ENCODE measurements at regions of chrX and their contacts with region 1.

Region 1: DNA sequence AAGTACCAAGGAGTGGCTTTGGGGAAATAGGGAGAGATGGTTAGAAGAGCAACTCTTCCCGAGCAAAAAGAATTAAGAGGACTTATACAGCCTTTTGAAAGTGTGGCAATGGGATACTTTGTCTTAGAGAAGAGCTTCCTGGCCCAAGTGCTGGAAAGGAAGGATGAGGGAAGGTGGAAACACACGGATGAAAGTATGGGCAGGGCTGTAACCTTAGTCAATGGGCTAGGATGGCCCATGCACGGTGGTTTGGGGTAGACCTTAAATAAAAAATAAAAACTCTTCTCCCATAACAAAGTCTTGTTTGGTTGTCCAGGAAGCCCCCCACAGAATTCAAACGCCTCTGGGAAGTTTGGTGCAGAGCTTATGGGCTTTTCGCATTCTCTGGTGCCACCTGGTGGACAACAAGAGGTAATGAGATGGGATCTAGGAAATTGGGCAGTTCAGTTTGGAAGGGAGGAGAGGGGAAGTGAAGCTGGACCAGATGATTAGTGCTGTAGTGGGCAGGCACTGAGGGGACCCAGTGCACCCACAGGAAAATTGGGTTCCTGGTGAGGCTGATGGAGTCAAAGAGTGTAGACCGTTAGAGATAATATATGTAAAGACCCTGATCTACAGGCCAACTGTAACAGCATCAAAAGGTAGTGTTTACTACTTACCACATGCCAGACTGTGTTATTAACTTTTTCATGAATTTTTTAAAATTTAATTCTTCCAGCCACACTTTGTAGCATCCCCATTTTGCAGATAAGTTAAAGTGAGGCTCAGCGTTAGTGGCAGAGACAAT is 13.8 kb upstream of the ENOX2 start:
- DNase-seq: peak; percentile 66
- ATAC-seq: peak; percentile 57
- H3K4me3 ChIP-seq: no peak overlapping the region
- H3K4me3 Mint-ChIP-seq: no peak overlapping the region
- H3K27ac ChIP-seq: no peak overlapping the region
- H3K27ac Mint-ChIP-seq: no peak overlapping the region
- H3K4me1 ChIP-seq: no peaks in the 10 kb centered on the region
- H3K4me1 Mint-ChIP-seq: no peaks in the 10 kb centered on the region
- H3K27me3 ChIP-seq: peaks cover 0 to 5% (median 0%) of the 10 kb centered on the region in 4 experiments
- H3K27me3 Mint-ChIP-seq: peaks cover 3% of the 10 kb centered on the region
- CTCF ChIP-seq: peak; percentile 72

Region 2: GRCh38 chrX:129600981-129601424 is 1315.8 kb before region 1 on chrX:
- CTCF ChIA-PET with region 1: no interaction called
- POLR2A ChIA-PET with region 1: no interaction called
- intact Hi-C with region 1: loop called (anchors 5 kb)
- DNase-seq: peak; percentile 37
- ATAC-seq: peak; percentile 37
- H3K4me3 ChIP-seq: no peak overlapping the region
- H3K4me3 Mint-ChIP-seq: no peak overlapping the region
- H3K27ac ChIP-seq: no peak overlapping the region
- H3K27ac Mint-ChIP-seq: no peak overlapping the region
- H3K4me1 ChIP-seq: peaks cover 8 to 15% of the 10 kb centered on the region in 2 donors
- H3K4me1 Mint-ChIP-seq: peaks cover 14% of the 10 kb centered on the region
- H3K27me3 ChIP-seq: no peaks in the 10 kb centered on the region
- H3K27me3 Mint-ChIP-seq: no peaks in the 10 kb centered on the region
- CTCF ChIP-seq: peak; percentile 67

Region 3: DNA sequence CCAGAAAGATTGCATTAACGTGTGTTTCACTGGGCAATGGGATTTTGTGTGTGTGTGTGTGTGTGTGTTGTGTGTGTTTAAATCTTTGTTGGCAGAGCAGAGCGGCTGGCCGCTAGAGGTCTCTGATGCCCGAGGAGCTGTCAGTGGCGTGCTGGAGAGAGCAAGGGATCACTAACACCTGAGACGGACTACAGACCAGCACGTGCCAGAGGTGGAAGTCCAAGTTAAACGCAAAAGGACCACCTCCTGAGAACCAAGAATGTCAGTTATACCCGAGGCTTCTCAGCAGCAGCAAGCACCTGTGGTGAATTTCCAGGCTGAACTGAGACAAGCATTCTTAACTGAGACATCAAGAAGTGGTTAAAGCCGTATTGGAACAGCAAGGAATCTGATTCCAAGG is 586.1 kb before region 1 on chrX:
- CTCF ChIA-PET with region 1: interaction called, 14 read pairs
- POLR2A ChIA-PET with region 1: no interaction called
- intact Hi-C with region 1: no loop called
- DNase-seq: peak; percentile 50
- ATAC-seq: no peak
- H3K4me3 ChIP-seq: no peak overlapping the region
- H3K4me3 Mint-ChIP-seq: no peak overlapping the region
- H3K27ac ChIP-seq: no peak overlapping the region
- H3K27ac Mint-ChIP-seq: no peak overlapping the region
- H3K4me1 ChIP-seq: no peaks in the 10 kb centered on the region
- H3K4me1 Mint-ChIP-seq: no peaks in the 10 kb centered on the region
- H3K27me3 ChIP-seq: peaks cover 0 to 7% (median 3%) of the 10 kb centered on the region in 4 experiments
- H3K27me3 Mint-ChIP-seq: peaks cover 11% of the 10 kb centered on the region
- CTCF ChIP-seq: no peak

Region 4: DNA sequence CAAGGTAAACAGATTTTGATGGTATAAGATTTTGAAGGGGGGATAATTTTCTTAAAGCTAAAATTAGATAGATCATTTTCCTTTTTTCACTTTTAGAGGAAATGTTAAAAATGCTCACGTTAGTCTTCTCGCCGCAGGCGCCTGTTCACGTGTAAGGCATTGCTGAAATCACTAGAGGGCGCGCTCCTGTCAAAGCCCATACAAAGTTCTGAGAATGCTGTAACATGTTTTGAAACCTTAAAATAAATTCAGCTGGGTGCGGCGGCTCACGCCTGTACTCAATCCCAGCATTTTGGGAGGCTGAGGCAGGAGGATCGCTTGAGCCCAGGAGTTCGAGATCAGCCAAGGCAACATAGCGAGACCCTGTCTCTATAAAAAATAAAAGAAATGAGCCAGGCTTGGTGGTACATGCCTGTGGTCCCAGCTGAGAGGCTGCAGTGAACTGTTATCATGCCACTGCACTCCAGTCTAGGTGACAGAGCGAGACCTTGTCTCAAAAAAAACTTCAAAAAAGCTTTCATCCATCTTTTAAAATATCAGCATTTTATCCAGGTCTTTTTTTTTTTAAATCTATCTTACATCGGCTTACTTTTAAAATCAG is 377.0 kb before region 1 on chrX:
- CTCF ChIA-PET with region 1: interaction called, 58 read pairs
- POLR2A ChIA-PET with region 1: no interaction called
- intact Hi-C with region 1: no loop called
- DNase-seq: peak; percentile 47
- ATAC-seq: no peak
- H3K4me3 ChIP-seq: no peak overlapping the region
- H3K4me3 Mint-ChIP-seq: no peak overlapping the region
- H3K27ac ChIP-seq: no peak overlapping the region
- H3K27ac Mint-ChIP-seq: no peak overlapping the region
- H3K4me1 ChIP-seq: no peaks in the 10 kb centered on the region
- H3K4me1 Mint-ChIP-seq: no peaks in the 10 kb centered on the region
- H3K27me3 ChIP-seq: no peaks in the 10 kb centered on the region
- H3K27me3 Mint-ChIP-seq: peaks cover 13% of the 10 kb centered on the region
- CTCF ChIP-seq: peak; percentile 71

Region 5: DNA sequence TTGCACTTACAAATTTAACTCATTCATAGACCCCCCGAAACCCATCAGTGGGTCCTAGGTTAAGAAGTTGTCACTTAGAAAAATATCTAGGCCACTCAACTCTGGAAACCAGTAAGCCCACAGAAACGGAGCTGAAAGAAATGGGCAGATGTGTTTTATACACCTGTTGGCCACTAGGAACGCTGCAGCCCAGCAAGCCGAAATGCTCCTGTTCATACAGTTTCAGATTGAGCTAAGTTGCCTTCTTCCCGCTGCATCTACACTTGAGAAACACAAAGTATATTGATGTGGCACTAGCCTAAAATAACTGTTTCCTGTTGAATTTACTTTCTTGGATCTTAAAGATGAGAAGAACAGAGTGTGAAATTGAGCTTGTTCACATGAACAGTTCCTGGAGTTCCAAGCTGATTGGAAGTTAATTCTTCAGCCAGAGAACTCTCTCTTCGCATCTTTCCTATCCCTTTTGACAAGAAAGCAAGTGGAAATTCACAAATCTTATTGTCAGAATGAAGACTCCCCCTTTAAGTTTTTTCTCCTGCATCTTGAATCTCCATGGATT is 340.9 kb before region 1 on chrX:
- CTCF ChIA-PET with region 1: interaction called, 13 read pairs
- POLR2A ChIA-PET with region 1: no interaction called
- intact Hi-C with region 1: no loop called
- DNase-seq: peak; percentile 19
- ATAC-seq: no peak
- H3K4me3 ChIP-seq: no peak overlapping the region
- H3K4me3 Mint-ChIP-seq: no peak overlapping the region
- H3K27ac ChIP-seq: no peak overlapping the region
- H3K27ac Mint-ChIP-seq: no peak overlapping the region
- H3K4me1 ChIP-seq: no peaks in the 10 kb centered on the region
- H3K4me1 Mint-ChIP-seq: no peaks in the 10 kb centered on the region
- H3K27me3 ChIP-seq: peaks cover 0 to 3% (median 0%) of the 10 kb centered on the region in 4 experiments
- H3K27me3 Mint-ChIP-seq: no peaks in the 10 kb centered on the region
- CTCF ChIP-seq: peak; percentile 66

Region 6: GRCh38 chrX:130702867-130703707 is 213.7 kb before region 1 on chrX:
- CTCF ChIA-PET with region 1: no interaction called
- POLR2A ChIA-PET with region 1: no interaction called
- intact Hi-C with region 1: no loop called
- DNase-seq: no peak
- ATAC-seq: no peak
- H3K4me3 ChIP-seq: no peak overlapping the region
- H3K4me3 Mint-ChIP-seq: no peak overlapping the region
- H3K27ac ChIP-seq: no peak overlapping the region
- H3K27ac Mint-ChIP-seq: no peak overlapping the region
- H3K4me1 ChIP-seq: no peaks in the 10 kb centered on the region
- H3K4me1 Mint-ChIP-seq: no peaks in the 10 kb centered on the region
- H3K27me3 ChIP-seq: no peaks in the 10 kb centered on the region
- H3K27me3 Mint-ChIP-seq: no peaks in the 10 kb centered on the region
- CTCF ChIP-seq: no peak

Measured in B cell (primary cell).